ENCODE measurements at regions of chr5 and their contacts with region 1.

Region 1: DNA sequence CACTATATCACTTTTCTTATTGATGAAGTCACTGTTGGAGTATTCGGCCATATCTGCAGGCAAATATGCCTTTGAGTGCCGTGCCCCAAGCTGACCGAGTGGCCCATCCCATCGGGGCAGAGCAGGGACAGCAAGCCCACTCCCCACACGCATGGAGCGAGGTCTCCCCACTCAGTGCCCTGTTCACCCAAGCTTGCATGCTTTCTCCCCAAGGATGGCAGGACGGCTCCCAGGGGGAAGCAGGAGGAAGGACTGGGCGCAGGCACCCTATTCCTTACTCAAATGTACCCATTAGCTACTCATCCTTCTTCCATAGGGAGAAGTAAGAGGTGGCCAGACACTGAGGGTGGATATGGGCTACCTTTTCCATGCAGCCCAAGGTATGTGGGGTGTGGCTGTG is 309.0 kb downstream of the IRX1 start:
- DNase-seq: no peak
- H3K4me3 ChIP-seq: no peak overlapping the region
- H3K27ac ChIP-seq: no peak overlapping the region
- H3K27me3 ChIP-seq: peaks cover 0 to 22% (median 0%) of the 10 kb centered on the region in 45 donors
- CTCF ChIP-seq: no peak

Region 2: GRCh38 chr5:4295663-4296339 is 391.2 kb after region 1 on chr5:
- intact Hi-C with region 1: loop called in 1 of 2 experiments (anchors 10 kb)
- DNase-seq: peak in 5 of 10 donors; percentile 12 to 51 (median 35)
- H3K4me3 ChIP-seq: no peak overlapping the region
- H3K27ac ChIP-seq: no peak overlapping the region
- H3K27me3 ChIP-seq: peaks cover 0 to 13% (median 0%) of the 10 kb centered on the region in 45 donors
- CTCF ChIP-seq: peak; percentile 34 to 81 (median 63)